Posterior vena cava (tissue), 2 donors: ENCODE measurements at regions of chr3 and their contacts with region 1.

Region 1: DNA sequence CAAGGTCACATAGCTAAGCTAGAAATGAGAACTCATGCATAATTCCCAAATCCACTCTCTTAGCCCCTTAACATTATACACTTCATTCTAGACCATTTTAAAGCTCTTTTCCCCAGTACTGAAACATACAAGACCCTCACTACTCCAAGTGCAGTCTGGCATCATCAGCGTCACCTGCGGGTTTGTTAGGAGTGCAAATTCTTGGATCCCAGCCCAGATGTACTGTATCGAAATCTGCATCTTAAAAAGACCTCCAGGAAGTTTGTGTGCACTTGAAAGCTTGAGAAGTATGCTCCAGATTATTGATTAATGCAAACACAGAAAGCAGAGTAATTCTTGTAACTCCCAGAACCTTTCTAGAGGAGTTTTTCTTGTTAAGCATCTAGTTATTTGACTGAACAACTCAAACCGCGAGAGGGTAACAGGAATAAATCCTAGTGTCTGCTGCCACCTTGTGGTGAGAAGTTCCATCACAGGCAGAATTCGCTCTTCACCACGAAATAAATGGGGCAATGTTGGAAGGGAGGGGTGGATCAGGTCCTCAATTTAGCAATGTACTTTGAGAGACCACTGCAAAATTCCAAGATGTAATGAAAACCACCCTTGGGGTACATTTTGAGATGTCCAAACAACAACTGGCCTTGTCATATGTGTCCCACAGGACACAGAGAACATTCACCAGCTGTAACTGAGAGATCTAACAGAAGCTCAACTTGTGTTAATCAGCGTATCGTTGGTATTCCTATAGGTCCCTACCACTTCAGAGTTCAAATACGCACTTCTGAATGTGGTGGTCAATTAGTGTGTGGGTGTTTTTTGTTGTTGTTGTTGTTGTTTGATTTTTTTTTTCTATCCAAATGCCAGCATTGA is 583 bp upstream of the C3orf49 start:
- DNase-seq: no peak

Region 2: DNA sequence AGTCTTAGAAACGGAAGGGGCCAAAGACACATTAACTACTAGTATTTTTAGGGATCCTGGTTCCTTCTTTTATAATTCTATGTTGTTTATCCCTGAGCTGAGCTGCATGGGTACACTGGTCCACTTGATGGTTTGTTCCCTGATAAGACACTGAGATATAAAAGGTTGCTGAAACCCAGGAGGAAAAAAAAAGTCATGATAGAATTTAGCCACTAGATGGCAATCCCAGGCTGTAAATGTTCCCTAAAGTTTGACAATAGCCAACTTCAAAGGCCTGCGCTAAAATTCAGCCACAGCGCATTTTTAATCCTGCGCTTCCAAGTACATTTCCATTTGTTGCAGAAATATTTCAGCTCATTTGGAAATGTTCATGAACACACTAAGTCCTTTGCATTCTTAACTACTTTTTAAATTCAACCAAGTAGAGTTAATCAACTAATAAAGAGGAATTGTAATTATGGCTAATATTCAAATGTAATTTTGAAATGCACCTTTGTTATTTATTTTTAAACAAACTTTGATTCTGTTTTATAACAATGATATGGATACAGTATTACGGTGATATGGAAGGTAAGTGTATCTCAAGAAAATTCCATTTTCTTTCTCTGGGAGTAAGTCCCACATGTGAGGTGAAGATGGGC is 1195.8 kb before region 1 on chr3:
- intact Hi-C with region 1: loop called in 1 of 2 experiments (anchors 10 kb)
- DNase-seq: no peak

Region 3: GRCh38 chr3:63349583-63350521 is 468.7 kb before region 1 on chr3:
- intact Hi-C with region 1: loop called in 1 of 2 experiments (anchors 2 kb)
- DNase-seq: no peak

Region 4: DNA sequence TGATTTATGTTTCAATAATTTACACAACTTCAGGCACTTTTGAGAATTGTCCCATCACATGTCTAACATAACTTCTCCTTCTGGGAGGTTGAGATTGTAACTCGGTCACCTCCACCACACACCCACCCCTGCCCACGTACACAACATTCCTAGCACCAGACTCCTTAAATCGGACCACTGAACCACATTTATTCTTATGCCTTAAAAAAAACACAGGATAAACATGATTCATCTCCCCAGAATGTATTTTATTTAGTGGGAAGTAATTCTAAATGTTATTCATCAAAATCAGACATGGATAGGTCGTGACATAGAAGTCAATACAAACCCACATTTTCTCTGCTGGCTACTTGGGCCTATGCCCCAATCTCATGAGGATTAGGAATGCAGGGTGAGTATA is 163.0 kb before region 1 on chr3:
- intact Hi-C with region 1: no loop called
- DNase-seq: no peak

Region 5: GRCh38 chr3:63706321-63707116 is 112.0 kb before region 1 on chr3:
- intact Hi-C with region 1: no loop called
- DNase-seq: no peak